GM18951 (cell line): ENCODE measurements at regions of chr2 and their contacts with region 1.

Region 1: DNA sequence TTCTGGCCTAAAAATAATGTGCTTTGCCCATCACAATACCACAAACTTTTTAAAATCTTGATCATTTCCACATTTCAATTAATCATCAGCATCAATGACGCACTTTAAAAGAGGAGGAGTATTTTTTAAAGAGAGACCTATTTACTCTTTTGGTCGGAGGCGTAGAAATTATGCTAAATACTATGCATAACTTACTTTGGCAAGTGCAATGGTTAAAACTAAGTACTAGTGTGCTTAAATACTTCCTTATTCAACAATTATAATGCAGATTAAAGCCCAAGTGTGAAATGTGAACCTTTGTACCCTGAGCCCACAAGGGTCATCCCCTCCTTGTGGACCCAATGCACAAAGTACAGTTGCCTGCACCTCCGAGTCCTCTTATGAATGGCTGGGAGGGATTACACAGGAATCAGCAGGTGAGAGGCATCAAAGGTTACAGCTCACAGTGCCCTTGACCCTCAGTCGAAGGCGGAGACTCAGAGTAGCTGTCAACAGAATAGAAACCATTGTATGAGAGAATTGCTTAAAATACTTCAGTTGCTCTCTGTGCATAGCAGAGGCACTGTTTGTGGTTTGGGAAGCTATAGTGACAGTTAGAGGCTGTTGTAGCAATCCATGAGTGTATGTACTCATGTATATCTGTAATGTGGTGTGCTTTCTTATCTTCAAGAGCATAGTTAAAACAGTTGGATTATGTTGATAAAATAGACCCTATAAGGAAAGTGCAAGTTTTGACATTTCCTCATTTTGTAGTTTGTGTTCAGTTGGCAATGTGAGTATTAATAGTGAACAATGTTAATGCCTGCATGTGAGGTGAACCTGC is 151.7 kb upstream of the ITGA4 start:
- POLR2A ChIP-seq: peak; percentile 54

Region 2: DNA sequence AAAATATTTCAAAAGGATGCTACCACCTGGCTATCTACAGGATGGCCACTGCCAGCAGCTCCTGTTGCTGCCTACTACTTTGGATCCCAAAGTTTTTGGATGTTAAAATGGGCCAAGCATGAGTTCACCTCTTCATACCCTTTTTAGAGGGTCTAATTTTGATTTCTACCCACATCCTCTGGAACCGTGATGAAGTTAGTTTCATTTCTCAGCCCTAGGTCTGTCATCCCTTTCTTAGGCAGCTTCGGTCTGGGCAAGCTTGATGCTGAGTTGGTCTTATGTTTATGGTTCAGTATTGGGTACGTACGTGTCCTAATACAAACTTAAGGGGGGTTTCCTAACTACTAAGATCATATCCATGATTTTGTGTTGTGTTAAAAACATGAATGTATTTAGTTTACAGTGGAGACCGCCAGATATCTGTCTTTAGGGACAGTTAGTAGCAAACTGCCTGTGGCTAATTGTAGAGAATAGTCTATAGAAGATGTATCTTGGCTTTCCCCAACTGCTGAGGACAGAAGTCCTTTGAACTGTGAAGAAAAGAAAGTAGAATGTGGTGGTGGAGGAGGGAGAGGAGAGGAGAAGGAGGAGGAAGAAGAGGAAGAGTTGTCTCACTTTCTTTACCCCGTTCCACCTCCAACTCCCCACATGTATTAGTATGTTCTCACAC is 140.2 kb before region 1 on chr2:
- in situ Hi-C with region 1: loop called (anchors 10 kb)
- POLR2A ChIP-seq: no peak

Region 3: GRCh38 chr2:181457121-181457740 is 151.7 kb after region 1 on chr2 and contains the start of gene ITGA4:
- in situ Hi-C with region 1: loop called (anchors 10 kb)
- POLR2A ChIP-seq: peak; percentile 66

Region 4: GRCh38 chr2:181828122-181828705 is 522.7 kb after region 1 on chr2:
- in situ Hi-C with region 1: no loop called
- POLR2A ChIP-seq: no peak